Activated CD4-positive, alpha-beta memory T cell treated with anti-CD3 and anti-CD28 coated beads for 36 hours (primary cell): ENCODE measurements at regions of chr19 and their contacts with region 1.

Region 1: DNA sequence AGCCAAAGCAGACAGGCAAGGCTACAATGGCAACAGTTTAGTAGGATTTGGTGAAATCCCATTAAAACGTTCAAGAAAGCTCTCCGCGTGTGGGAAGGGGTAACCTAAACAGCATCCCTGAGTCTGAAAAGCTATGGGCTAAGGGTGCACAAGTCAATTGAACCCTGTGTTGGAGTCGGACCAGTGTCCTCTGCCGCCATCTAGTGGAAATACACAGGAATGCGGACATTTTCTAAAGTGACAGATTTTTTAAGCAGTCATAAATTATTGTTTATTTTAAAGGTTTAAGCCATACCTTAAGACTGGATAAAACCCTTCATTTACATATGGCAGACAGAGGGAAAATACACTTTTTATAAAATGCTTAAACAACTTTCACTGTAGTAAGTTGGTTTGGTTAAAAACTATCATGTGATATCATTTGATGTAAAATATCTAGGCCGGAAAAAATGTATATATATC is 26.5 kb upstream of the LSM14A start:
- DNase-seq: peak; percentile 66
- H3K4me3 Mint-ChIP-seq: no peak overlapping the region
- H3K27ac Mint-ChIP-seq: no peak overlapping the region
- H3K4me1 Mint-ChIP-seq: no peaks in the 10 kb centered on the region
- H3K27me3 Mint-ChIP-seq: no peaks in the 10 kb centered on the region

Region 2: DNA sequence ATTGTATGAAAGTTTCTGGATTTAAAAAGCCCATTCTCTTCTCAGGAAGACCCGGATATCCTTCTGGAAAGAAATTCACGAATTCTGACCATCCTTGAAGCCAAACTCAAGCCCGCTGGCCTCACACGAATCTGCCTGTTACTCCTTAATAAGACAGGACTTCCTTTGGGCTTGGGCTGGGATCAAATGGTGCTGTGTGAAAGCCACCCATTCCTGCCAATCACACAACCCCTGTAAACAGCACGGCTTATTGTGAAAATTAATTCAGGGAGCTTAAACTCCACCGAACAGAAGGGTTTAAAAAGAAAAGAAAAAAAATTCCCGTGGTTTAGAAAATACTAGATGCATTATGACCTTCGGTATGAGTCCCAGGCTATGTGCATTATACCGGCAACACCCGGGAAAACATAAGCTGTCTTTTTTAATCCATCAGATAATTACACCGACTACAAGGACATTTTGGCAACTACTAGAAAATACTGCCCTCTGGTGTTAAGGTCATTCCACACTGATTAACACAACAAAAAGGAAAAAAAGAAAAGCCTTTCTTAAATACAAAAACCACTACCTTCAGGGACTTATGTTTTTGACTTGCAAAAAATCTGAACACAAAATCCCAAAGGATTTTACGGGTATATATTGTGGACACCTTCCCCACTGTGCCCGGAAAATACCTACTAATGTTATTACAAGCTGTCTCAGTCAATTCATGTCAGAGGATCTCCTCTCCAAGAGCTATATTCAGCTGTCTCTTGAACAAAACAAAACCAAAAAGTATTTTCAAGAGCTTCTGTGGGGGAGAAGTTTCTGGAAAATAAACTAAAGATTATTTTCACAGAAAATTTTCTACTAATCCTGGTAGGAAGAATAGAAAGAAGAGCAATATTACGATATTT is 49.5 kb before region 1 on chr19:
- CTCF ChIA-PET with region 1: interaction called, 10 read pairs
- POLR2A ChIA-PET with region 1: no interaction called
- intact Hi-C with region 1: no loop called
- DNase-seq: no peak
- H3K4me3 Mint-ChIP-seq: no peak overlapping the region
- H3K27ac Mint-ChIP-seq: no peak overlapping the region
- H3K4me1 Mint-ChIP-seq: peaks cover 2% of the 10 kb centered on the region
- H3K27me3 Mint-ChIP-seq: peaks cover 6% of the 10 kb centered on the region

Region 3: DNA sequence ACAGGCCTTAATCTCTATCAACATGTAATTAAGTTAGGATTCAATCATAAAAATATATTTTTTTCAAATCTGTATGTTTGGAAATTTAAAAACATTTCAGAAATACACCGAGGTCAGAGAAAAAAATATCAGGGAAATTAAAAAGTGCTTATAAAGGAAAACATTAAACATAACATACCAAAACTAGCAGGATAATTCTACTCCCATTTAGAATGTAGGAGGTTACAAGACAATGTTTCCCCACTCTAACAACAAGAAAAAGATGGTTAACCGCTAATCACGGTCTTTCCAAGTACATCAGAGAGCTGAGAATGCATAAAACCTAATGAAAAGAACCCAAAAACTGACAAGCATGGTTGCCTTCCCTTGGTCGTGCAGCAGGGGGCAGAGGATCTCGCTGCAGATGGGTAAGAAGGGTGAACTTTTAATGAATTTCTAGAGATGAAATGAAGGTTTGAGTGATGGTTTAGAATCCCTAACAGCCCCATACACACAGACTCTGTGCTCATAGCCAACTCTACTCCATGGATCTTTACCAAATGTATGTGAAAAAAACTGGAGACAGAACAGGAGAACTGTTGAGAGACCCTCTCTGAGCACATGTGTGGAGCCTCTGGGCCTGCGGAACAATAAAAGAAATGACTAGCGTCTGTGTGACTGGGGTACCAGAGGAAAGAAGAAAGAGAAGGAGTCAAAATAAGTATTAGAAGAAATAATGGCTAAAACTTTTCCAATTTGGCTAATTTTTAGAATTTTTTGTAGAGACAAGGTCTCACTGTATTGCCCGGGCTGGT is 24.7 kb before region 1 on chr19:
- CTCF ChIA-PET with region 1: interaction called, 81 read pairs
- POLR2A ChIA-PET with region 1: no interaction called
- intact Hi-C with region 1: loop called (anchors 1 kb)
- DNase-seq: peak; percentile 73
- H3K4me3 Mint-ChIP-seq: no peak overlapping the region
- H3K27ac Mint-ChIP-seq: no peak overlapping the region
- H3K4me1 Mint-ChIP-seq: peaks cover 13% of the 10 kb centered on the region
- H3K27me3 Mint-ChIP-seq: peaks cover 5% of the 10 kb centered on the region